Activated CD8-positive, alpha-beta T cell treated with anti-CD3 and anti-CD28 coated beads, Interleukin-2, amount 10 ng/mL, durations not matched to agents 7 days and 5 days (primary cell): ENCODE measurements at regions of chr10 and their contacts with region 1.

Region 1: GRCh38 chr10:62816331-62817120 is at the start of gene EGR2:
- DNase-seq: peak; percentile 96
- ATAC-seq: peak; percentile 82
- H3K4me3 Mint-ChIP-seq: peak within 1 kb of the TSS; percentile 88
- H3K27ac Mint-ChIP-seq: peak within 1 kb of the TSS; percentile 97
- H3K4me1 Mint-ChIP-seq: peaks cover 56% of the 10 kb centered on the region
- H3K27me3 Mint-ChIP-seq: peaks cover 55% of the 10 kb centered on the region
- total RNA-seq, gene EGR2: 0.50 to 1.3 TPM

Region 2: DNA sequence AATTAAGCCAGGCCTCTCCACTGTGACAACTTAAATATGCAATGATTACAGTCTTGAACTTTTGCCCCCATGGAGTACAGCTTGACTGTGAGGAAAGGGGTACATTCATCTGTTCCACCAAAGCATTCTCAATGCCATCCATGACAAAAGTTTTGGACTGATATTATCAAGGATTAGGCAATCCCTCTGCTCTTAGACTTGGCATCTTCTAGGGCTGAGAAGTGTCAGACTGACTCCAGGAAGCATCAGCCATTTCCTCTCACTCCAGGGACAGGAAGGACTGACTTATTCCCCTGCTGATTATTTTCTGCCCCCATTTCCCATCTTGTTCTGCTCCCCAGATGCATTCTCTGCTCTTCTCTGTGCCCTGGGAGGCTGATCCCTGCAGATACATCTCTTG is 372.7 kb before region 1 on chr10:
- CTCF ChIA-PET with region 1: no interaction called
- POLR2A ChIA-PET with region 1: no interaction called
- DNase-seq: no peak
- ATAC-seq: no peak
- H3K4me3 Mint-ChIP-seq: no peak overlapping the region
- H3K27ac Mint-ChIP-seq: no peak overlapping the region
- H3K4me1 Mint-ChIP-seq: no peaks in the 10 kb centered on the region
- H3K27me3 Mint-ChIP-seq: peaks cover 10% of the 10 kb centered on the region

Region 3: DNA sequence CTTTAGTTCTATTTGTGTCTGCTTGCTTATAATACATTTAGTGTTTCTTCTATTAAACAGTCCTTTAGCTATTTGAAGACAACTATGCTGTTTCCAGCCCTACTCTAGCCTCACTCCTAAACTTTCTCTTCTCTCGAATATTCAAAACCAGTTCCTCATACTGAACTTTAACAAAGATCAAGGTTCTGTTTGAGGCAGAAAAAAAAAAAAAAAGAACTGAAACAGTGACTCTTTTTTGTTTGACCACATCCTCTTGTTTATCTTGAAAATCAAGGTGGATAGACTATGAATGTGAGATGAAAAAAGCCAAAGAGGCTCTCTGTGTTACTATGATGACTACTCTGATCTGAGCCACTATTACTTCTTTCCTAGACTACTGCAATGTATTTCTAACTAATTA is 288.1 kb before region 1 on chr10:
- CTCF ChIA-PET with region 1: interaction called, 16 read pairs
- POLR2A ChIA-PET with region 1: no interaction called
- DNase-seq: no peak
- ATAC-seq: peak; percentile 93
- H3K4me3 Mint-ChIP-seq: peak overlapping the region; percentile 40
- H3K27ac Mint-ChIP-seq: peak overlapping the region; percentile 86
- H3K4me1 Mint-ChIP-seq: peaks cover 40% of the 10 kb centered on the region
- H3K27me3 Mint-ChIP-seq: no peaks in the 10 kb centered on the region

Region 4: DNA sequence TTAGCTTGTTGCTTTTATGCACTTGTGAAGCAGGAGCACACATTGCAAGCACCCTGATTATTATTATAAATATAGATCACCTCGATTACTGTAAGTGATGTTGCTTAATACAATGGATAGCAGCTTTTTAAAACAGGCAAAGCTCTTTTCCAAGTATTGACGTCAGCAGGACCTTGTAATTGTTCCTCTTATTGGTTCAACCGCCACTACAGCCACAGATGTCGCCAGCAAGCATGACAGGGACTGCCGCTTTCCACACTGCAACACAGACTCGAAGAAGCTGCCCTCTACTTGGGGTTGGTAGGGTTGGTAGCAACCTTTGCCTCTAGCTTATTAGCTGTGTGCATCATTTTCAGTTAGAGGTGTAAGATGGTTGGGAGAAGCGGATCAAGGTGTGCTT is 274.7 kb before region 1 on chr10:
- CTCF ChIA-PET with region 1: no interaction called
- POLR2A ChIA-PET with region 1: no interaction called
- DNase-seq: no peak
- ATAC-seq: no peak
- H3K4me3 Mint-ChIP-seq: no peak overlapping the region
- H3K27ac Mint-ChIP-seq: no peak overlapping the region
- H3K4me1 Mint-ChIP-seq: no peaks in the 10 kb centered on the region
- H3K27me3 Mint-ChIP-seq: peaks cover 2% of the 10 kb centered on the region

Region 5: GRCh38 chr10:62610649-62611229 is 205.8 kb before region 1 on chr10:
- CTCF ChIA-PET with region 1: interaction called, 98 read pairs
- POLR2A ChIA-PET with region 1: interaction called, 6 read pairs
- DNase-seq: peak; percentile 77
- ATAC-seq: peak; percentile 90
- H3K4me3 Mint-ChIP-seq: no peak overlapping the region
- H3K27ac Mint-ChIP-seq: no peak overlapping the region
- H3K4me1 Mint-ChIP-seq: peaks cover 10% of the 10 kb centered on the region
- H3K27me3 Mint-ChIP-seq: no peaks in the 10 kb centered on the region

Region 6: DNA sequence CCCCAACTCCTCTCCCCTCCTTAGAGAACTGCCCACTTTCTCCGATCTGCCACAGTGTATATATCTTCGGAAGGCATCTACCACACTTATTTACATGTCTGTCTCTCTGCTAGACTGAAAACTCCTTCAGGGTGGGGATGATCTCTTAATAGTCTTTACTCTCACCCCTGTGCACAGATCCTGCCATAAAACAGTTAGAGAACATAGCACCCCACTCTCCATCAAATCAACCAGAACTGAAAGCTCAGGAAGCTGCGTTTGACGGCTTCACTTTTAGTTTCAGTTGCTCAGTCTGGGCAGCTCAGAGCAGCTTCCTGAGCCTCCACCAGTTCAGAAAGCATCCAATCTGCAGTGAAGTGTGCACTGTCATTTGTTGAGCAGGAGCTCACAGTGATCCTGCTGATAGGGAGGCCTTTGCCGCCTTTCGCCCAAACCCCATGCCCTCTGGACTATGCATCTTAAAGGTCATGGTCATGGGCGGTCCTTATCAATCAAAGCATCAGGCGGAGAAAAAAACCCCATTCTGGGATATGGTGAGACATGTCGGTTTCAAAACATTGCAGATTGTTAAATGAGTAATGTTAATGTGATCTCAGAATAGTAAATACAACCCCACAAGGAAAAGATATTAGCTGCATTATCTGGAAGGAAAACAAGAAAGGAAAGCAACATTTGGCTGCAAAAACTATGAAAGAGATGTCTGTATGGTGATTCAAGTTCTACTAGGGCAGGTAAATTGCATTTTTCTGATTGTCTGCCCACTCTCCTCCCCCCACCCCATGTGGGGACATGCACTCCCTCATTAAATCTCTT is 179.1 kb before region 1 on chr10:
- CTCF ChIA-PET with region 1: interaction called, 82 read pairs
- POLR2A ChIA-PET with region 1: interaction called, 26 read pairs
- DNase-seq: peak; percentile 82
- ATAC-seq: peak; percentile 96
- H3K4me3 Mint-ChIP-seq: no peak overlapping the region
- H3K27ac Mint-ChIP-seq: no peak overlapping the region
- H3K4me1 Mint-ChIP-seq: peaks cover 16% of the 10 kb centered on the region
- H3K27me3 Mint-ChIP-seq: no peaks in the 10 kb centered on the region

Region 7: GRCh38 chr10:62732841-62733653 is 83.5 kb before region 1 on chr10:
- CTCF ChIA-PET with region 1: interaction called, 39 read pairs
- POLR2A ChIA-PET with region 1: interaction called, 28 read pairs
- DNase-seq: peak; percentile 80
- ATAC-seq: peak; percentile 89
- H3K4me3 Mint-ChIP-seq: no peak overlapping the region
- H3K27ac Mint-ChIP-seq: no peak overlapping the region
- H3K4me1 Mint-ChIP-seq: peaks cover 16% of the 10 kb centered on the region
- H3K27me3 Mint-ChIP-seq: peaks cover 5% of the 10 kb centered on the region

Region 8: GRCh38 chr10:62804356-62805230 is 11.9 kb before region 1 on chr10 and contains the start of gene ADO:
- CTCF ChIA-PET with region 1: interaction called, 40 read pairs
- POLR2A ChIA-PET with region 1: interaction called, 36 read pairs
- DNase-seq: peak; percentile 83
- ATAC-seq: peak; percentile 89
- H3K4me3 Mint-ChIP-seq: peak within 1 kb of the TSS; percentile 93
- H3K27ac Mint-ChIP-seq: peak within 1 kb of the TSS; percentile 100
- H3K4me1 Mint-ChIP-seq: peaks cover 44% of the 10 kb centered on the region
- H3K27me3 Mint-ChIP-seq: peaks cover 7% of the 10 kb centered on the region
- total RNA-seq, gene ADO: 22.2 to 22.6 TPM

Region 9: DNA sequence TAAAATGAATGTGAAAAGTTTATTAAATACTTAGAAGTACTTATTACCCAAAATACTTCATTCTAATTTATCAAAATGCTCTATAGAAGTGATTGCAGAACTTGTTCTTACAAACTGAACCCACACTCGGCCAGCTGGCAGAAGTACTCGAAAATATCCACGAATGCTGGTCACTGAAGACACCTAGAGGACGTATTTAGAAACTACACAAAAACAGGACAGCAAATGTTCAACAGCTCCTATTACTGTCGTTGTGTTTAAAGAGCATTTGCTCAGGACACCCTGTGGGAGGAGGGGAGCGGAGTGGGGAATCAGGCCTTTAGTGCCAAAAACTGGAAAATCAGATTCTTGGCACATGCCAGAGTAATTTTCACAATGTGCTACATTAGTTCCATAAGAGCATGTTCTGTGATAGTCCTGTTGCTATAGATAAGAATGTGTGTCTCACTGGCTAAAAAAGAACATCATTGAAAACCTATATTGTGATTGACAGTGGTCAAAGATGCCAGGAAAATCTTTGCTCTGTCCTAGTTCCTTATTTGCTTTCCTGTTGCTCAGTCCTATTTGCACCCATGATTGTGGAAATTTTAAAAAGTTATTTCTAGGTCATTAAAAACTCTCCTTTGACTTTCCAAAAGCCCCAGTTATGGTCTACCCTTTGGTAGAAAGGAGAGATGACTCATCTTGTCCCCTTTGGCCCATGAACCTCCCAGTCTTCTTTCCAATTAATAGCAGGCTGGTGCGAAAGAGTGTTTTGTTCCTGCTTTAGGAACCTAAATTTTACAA is 267.6 kb after region 1 on chr10:
- CTCF ChIA-PET with region 1: interaction called, 11 read pairs
- POLR2A ChIA-PET with region 1: no interaction called
- DNase-seq: peak; percentile 48
- ATAC-seq: peak; percentile 74
- H3K4me3 Mint-ChIP-seq: no peak overlapping the region
- H3K27ac Mint-ChIP-seq: no peak overlapping the region
- H3K4me1 Mint-ChIP-seq: no peaks in the 10 kb centered on the region
- H3K27me3 Mint-ChIP-seq: peaks cover 12% of the 10 kb centered on the region